Dorsolateral prefrontal cortex (tissue), 120 donors: ENCODE measurements at regions of chr2 and their contacts with region 1.

Region 1: DNA sequence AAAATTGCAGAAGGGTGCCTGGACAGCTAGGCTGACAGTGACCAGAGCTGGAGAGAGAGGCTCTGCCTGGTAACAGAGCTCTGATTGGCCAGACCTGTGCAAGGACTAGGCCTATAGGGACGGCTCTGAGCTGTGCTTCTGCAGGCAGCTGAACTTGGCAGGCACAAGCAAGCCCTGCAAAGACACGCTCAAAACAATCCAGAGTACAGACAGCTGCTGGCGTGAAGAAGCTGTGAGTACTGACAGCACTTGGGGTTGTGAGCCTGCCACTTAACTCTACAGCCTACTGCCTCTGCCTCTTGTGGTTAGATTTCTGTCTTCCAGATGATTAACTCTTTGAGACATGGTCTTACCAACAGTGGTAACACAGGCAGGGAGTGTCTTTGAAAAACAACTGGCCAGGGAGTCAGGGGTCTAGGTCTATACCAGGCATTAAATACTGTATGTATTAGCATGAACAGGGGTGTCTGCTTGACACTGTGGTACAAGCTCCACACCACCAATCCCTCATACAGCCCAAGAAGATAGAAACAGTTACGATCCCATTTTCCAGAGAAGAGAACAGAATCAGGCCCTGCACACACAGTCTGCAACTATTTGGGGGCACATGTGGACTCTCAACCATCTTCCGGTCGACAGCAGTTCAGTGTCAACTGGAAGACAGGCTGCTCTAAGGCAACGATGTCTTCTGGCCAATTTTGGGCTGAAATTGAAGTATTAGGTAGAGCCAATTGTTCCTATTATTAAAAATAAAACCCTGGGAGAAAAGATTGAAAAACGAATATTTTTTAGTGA is 568.4 kb downstream of the TNS1 start:
- DNase-seq: peak; percentile 63 to 96 (median 92)
- H3K4me3 ChIP-seq: peak overlapping the region in 29 of 59 donors; percentile 3 to 42 (median 24)
- H3K27ac ChIP-seq: peak overlapping the region in 18 of 59 donors; percentile 0 to 72 (median 34)
- H3K27me3 ChIP-seq: no peaks in the 10 kb centered on the region
- CTCF ChIP-seq: peak in 13 of 56 donors; percentile 7 to 46 (median 23)

Region 2: GRCh38 chr2:217248312-217248935 is 186.0 kb before region 1 on chr2:
- intact Hi-C with region 1: loop called in 1 of 2 experiments (anchors 5 kb)
- DNase-seq: peak in 9 of 10 donors; percentile 42 to 75 (median 64)
- H3K4me3 ChIP-seq: peak overlapping the region in 42 of 59 donors; percentile 2 to 52 (median 28)
- H3K27ac ChIP-seq: peak overlapping the region in 50 of 59 donors; percentile 7 to 83 (median 64)
- H3K27me3 ChIP-seq: no peaks in the 10 kb centered on the region
- CTCF ChIP-seq: peak in 1 of 56 donors; percentile 13

Region 3: GRCh38 chr2:217501887-217502286 is 67.5 kb after region 1 on chr2:
- intact Hi-C with region 1: loop called in 1 of 2 experiments (anchors 10 kb)
- DNase-seq: no peak
- H3K4me3 ChIP-seq: no peak overlapping the region
- H3K27ac ChIP-seq: no peak overlapping the region
- H3K27me3 ChIP-seq: no peaks in the 10 kb centered on the region
- CTCF ChIP-seq: no peak

Region 4: DNA sequence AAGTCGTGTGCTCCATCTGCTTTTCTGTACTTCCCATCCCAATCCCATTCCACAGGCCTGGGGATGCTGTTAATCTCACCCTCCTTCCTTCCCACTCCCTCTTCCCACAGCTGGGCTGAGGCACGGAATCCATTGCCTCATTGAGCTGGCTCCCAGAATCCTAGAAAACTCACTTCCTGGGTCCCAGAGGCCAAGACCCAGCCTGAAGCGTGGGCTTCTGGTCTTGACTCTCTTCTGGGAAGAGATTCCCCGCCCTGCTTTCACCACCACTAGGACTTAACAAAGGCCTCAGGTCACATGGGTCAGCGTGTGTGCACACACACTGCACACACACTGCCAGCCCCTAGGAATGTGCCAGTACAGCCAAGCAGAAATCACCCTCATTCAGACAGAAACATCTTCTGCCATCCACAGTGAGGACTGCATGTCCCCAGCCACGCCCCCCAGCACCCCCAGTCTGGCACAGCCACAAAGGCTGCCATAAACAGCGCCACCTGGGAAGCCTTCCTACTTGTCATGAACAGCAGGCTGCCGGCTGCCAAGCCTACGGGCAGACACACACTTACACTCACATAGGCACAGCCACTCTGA is 402.6 kb after region 1 on chr2:
- intact Hi-C with region 1: no loop called
- DNase-seq: peak in 9 of 10 donors; percentile 68 to 89 (median 78)
- H3K4me3 ChIP-seq: peak overlapping the region in 2 of 59 donors; percentile 3 to 17
- H3K27ac ChIP-seq: peak overlapping the region in 49 of 59 donors; percentile 9 to 92 (median 69)
- H3K27me3 ChIP-seq: no peaks in the 10 kb centered on the region
- CTCF ChIP-seq: peak in 48 of 56 donors; percentile 12 to 66 (median 38)